Activated CD4-positive, alpha-beta T cell treated with anti-CD3 and anti-CD28 coated beads, Interleukin-2, amount 10 ng/mL, durations not matched to agents 7 days and 5 days (primary cell): ENCODE measurements at regions of chr19 and their contacts with region 1.

Region 1: DNA sequence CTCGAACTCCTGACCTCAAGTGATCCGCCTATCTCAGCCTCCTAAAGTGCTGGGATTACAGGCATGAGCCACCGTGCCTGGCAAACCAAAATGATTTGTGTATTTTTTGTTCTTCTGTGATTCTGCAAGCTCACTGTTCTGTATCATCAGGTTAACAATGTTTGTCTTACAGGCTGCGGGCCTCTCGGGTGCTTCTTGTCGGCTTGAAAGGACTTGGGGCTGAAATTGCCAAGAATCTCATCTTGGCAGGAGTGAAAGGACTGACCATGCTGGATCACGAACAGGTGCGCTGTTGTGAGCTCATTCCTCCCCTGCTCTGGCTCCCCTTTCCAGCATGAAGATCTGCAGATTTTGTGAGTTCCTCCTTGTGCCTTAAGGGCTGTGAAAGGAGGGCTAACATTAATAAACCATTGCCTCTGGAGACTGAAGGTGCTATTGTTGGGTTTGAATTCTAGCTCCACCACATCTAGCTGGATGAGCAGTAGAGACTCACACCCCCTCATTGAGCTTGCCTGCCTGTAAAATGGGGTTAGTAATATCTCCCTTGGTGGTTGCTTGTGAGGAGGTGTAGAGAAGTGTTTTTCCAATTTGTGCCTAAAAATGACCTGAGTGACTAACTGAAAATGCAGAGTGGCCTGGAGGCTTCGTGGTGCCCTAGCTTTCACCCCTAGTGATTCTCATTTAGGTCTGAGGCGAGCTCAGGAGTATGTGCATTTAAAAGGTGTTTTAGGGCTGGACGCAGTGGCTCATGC is 12.9 kb downstream of the SAE1 start:
- DNase-seq: no peak
- H3K4me3 Mint-ChIP-seq: no peak overlapping the region
- H3K27ac Mint-ChIP-seq: peak overlapping the region; percentile 32
- H3K4me1 Mint-ChIP-seq: peaks cover 53% of the 10 kb centered on the region
- H3K27me3 Mint-ChIP-seq: no peaks in the 10 kb centered on the region

Region 2: DNA sequence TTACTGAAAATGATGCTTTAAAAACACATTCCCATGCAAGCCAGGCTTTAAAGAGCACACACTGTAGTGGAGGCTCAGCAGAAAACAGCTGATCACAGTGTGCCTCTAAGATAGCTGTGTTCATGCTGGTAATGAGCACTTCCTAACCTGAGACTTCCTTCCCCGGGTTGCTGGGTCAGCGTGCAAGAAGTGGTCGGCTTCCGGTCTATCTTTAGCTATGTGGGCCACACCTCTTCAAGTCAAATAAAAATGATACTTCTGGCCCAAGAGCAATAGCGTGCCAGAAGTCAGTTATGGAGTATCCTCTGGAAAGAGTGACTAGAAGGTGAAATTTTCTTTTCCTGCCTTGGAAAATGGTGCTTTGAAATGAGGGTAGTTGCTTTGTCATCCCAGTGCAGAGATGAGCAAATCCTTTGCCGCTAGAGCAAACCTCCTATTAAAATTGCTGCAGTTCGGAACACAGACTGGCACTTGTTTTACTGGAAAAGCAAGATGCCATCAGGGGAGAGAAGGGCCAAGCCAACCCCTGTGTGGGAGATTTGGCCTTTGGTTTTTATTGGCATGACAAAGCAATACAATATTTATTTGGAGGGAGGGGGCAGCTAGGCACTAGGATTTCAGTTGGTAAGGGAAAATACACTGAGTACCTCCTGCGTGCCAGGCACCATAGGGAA is 218.5 kb before region 1 on chr19:
- CTCF ChIA-PET with region 1: no interaction called
- POLR2A ChIA-PET with region 1: interaction called, 10 read pairs
- DNase-seq: peak; percentile 21
- H3K4me3 Mint-ChIP-seq: no peak overlapping the region
- H3K27ac Mint-ChIP-seq: peak overlapping the region; percentile 1
- H3K4me1 Mint-ChIP-seq: peaks cover 41% of the 10 kb centered on the region
- H3K27me3 Mint-ChIP-seq: no peaks in the 10 kb centered on the region

Region 3: DNA sequence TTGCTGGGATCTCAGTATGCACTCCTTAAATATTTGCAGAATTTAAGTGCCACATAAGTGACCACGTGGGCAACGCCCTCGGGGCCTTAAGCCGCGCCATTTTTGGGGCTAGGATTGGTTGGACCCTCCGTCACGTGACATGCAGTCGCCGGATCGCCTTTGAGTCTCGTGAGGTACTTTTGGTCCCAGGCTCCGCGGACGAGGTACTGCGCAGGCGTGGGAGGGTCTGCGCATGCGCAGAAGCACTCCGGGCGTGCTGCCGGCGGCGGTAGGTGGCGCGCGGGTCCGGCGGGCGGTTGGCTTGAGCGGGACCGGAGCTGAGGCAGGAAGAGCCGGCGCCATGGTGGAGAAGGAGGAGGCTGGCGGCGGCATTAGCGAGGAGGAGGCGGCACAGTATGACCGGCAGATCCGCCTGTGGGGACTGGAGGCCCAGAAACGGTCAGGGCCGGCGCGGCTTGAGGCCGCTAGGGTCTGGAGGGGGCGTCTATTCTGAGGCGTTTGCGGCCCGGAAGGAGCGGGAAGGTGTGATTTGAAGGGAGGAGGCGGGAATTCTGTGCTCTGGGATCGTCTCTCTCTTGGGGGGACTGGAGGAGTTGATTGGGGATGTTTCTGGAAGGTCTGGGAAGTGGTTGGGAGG is 12.8 kb before region 1 on chr19 and contains the start of gene SAE1:
- CTCF ChIA-PET with region 1: interaction called, 24 read pairs
- POLR2A ChIA-PET with region 1: no interaction called
- DNase-seq: peak; percentile 92
- H3K4me3 Mint-ChIP-seq: peak within 1 kb of the TSS; percentile 99
- H3K27ac Mint-ChIP-seq: peak within 1 kb of the TSS; percentile 99
- H3K4me1 Mint-ChIP-seq: peaks cover 46% of the 10 kb centered on the region
- H3K27me3 Mint-ChIP-seq: no peaks in the 10 kb centered on the region
- total RNA-seq, gene SAE1: 162 to 168 TPM